K562 (cell line): ENCODE measurements at regions of chr1 and their contacts with region 1.

Region 1: DNA sequence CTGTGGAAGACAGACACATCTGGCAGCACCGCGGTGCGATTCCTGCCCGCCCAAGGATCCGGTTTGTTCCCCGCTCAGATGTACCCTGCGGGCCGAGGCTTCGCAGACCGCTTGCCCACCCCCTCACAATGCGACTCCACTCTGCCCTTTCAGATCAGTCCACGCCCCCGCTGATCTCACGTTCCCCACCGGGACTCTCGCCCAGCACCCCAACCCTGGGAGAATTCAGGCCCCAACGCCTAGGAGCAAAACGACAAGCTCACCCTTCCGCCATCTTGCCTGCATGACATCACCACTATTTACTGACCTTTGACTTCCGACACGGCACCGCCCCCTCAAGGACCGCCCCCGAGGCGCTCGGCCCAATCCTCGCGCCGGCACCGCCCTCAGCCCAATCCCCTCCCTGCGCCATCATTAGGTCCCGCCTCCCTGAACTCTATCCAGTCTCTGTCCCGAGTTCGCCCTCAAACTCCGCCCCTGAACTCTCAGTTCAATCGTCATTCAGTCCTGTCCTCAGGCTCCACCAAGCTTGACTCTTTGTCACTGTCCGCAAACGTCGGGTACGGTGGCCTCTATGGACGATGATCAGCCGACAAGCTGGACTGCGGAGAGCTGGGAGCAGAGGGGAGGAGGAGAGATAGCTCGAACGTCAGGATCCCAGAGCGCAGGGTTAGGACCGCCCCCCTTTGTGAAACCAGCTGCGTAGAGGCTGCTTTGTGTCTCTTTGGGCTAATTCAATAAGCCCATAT is at the start of gene BSDC1:
- DNase-seq: peak; percentile 98 to 100 (median 98)
- ATAC-seq: peak; percentile 91
- H3K4me3 ChIP-seq: peak within 1 kb of the TSS; percentile 68
- H3K27ac ChIP-seq: peak within 1 kb of the TSS; percentile 95
- H3K4me1 ChIP-seq: peaks cover 44 to 48% of the 10 kb centered on the region in 2 experiments
- H3K27me3 ChIP-seq: no peaks in the 10 kb centered on the region
- CTCF ChIP-seq: 0 out of 6 replicates have a peak, but pooled peaks of 1 of the 3 experiments have one; percentile 15
- EP300 ChIP-seq: peak; percentile 80
- POLR2A ChIP-seq: peak; percentile 94
- RAD21 ChIP-seq: peak in 1 of 2 experiments; percentile 16; a peak in 1 of 4 replicates
- polyA plus RNA-seq, gene BSDC1: 10.2 to 14.7 TPM

Region 2: DNA sequence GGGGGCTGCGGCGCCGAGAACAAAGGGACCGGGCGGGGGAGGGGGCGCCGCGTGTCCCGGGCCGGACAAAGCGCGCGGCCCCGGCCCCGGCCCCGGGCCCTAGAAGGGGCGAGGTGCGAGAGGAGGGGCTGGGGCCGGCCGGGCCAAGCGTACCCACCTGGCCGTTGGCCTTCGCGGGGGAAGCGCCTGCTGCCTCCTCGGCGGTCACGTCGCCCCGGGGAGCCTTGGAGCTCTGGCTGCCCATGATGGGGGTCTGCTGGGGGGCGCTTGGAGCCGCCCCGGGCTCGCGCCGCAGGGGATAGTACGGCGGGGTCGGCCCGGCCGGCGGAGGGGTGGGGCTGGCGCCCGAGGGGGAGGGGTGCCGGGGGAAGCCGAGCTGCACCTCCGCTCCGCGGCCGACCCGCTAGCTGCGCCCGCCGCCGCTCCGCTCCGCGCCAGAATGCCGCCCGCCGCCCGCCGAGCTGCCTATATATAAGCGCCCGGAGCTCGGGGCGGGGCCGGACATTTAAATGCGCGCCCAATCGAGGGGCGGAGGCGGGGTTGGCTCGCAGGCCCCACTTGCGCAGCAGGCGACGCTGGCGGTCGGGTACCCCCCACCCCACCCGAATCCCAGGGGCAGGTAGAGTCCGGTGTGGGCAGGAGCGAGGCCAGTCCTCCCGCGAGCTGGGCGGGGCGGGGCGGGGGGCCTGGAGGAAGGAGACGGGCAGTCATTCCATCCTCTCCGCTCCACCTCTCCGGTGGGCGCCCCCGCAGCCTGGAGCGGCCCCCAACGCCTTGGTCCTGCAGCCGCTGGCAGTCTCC is 58.3 kb before region 1 on chr1 and contains the start of gene MARCKSL1:
- CTCF ChIA-PET with region 1: no interaction called
- POLR2A ChIA-PET with region 1: interaction called, 47 read pairs
- in situ Hi-C with region 1: no loop called
- intact Hi-C with region 1: loop called (anchors 5 kb)
- DNase-seq: peak; percentile 89 to 95 (median 94)
- ATAC-seq: peak; percentile 77
- H3K4me3 ChIP-seq: peak within 1 kb of the TSS; percentile 89
- H3K27ac ChIP-seq: peak within 1 kb of the TSS; percentile 88
- H3K4me1 ChIP-seq: peaks cover 25 to 50% of the 10 kb centered on the region in 2 experiments
- H3K27me3 ChIP-seq: no peaks in the 10 kb centered on the region
- CTCF ChIP-seq: no peak
- EP300 ChIP-seq: no peak
- POLR2A ChIP-seq: peak; percentile 91
- RAD21 ChIP-seq: no peak
- polyA plus RNA-seq, gene MARCKSL1: 14.7 to 14.8 TPM

Region 3: DNA sequence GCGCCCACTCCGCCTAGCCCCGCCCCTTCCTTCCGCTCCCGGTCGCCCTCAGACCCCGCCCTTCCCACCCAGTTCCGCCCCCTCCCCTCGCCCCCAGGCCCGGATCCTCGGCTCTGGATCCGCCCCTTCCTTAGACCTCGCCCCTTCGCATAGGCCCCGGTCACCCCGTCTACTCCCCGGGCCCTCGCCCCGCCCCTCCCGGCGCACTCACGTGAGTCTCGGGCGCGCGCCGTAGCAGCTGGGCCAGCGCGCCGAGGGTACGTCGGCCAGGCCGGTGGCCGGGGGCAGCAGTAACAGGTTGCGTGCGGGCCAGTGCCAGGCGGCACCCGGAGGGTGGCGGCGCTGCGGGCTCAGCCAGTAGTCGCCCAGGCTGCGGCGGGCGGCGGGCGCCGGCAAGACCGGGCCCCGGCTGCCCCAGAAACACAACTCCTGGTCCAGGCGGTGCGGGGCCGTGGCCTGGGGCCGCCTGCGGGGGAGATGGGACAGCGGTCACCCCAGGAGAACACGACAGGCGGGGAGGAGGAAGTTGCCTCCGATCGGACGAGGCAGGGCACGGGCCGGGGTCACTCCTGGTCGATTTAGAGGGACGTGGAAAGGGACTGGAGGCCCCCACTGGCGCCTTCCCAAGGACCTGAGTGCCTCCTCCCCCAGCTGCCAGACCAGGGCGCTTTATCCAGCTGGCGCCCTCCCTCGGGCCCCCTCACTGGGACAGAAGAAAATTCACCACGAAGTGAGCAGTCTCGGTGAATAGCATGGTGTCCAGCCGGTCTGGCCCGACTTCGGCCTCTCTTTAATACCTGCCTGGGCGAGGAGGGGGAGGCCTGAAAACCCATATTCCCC is 42.7 kb before region 1 on chr1:
- CTCF ChIA-PET with region 1: no interaction called
- POLR2A ChIA-PET with region 1: interaction called, 6 read pairs
- in situ Hi-C with region 1: no loop called
- intact Hi-C with region 1: loop called (anchors 2 kb)
- DNase-seq: peak; percentile 99 to 100 (median 100)
- ATAC-seq: peak; percentile 95
- H3K4me3 ChIP-seq: peak overlapping the region; percentile 83
- H3K27ac ChIP-seq: peak overlapping the region; percentile 96
- H3K4me1 ChIP-seq: peaks cover 29 to 44% of the 10 kb centered on the region in 2 experiments
- H3K27me3 ChIP-seq: no peaks in the 10 kb centered on the region
- CTCF ChIP-seq: peak in 2 of 3 experiments; percentile 34 to 49; a peak in 5 of 6 replicates
- EP300 ChIP-seq: no peak
- POLR2A ChIP-seq: peak; percentile 76
- RAD21 ChIP-seq: no peak

Region 4: DNA sequence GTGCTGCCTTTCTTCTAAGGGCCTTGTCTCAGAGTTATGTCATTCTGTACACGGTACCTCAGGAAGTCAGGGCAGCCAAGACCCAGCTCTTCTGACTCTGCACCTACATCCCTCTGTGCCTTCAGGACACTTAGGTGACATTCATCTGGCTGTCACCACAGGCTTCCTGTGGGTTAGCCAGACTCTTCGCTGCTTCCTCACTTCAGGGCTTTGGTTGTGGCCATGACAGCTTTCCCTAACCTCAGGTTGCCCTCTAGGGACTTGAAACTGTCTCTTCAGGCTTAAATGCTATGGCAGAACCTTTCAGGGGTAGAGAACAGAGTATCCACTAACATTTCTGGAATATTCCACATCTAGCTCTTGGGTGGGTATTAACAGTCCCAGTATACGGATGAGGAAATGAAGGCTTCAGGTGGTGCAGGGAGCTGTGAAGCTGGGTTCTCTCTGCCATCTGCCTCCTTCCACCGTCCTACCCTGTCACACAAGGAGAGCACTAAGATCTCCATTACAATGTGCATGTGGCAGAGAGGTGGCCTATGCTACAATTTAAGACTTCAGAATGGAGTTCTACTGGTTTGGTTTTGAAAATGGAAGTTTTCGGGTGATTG is 22.1 kb before region 1 on chr1:
- CTCF ChIA-PET with region 1: no interaction called
- POLR2A ChIA-PET with region 1: interaction called, 62 read pairs
- in situ Hi-C with region 1: no loop called
- intact Hi-C with region 1: no loop called
- DNase-seq: peak in 1 of 4 experiments; percentile 15
- ATAC-seq: peak; percentile 43
- H3K4me3 ChIP-seq: no peak overlapping the region
- H3K27ac ChIP-seq: no peak overlapping the region; the same call in 2 of the 3 replicates
- H3K4me1 ChIP-seq: no peaks in the 10 kb centered on the region
- H3K27me3 ChIP-seq: no peaks in the 10 kb centered on the region
- CTCF ChIP-seq: peak in 2 of 3 experiments; percentile 24 to 37; a peak in 3 of 6 replicates
- EP300 ChIP-seq: no peak
- POLR2A ChIP-seq: peak; percentile 16; the same call in 1 of the 2 replicates
- RAD21 ChIP-seq: peak in 1 of 2 experiments; percentile 30; a peak in 2 of 4 replicates

Region 5: DNA sequence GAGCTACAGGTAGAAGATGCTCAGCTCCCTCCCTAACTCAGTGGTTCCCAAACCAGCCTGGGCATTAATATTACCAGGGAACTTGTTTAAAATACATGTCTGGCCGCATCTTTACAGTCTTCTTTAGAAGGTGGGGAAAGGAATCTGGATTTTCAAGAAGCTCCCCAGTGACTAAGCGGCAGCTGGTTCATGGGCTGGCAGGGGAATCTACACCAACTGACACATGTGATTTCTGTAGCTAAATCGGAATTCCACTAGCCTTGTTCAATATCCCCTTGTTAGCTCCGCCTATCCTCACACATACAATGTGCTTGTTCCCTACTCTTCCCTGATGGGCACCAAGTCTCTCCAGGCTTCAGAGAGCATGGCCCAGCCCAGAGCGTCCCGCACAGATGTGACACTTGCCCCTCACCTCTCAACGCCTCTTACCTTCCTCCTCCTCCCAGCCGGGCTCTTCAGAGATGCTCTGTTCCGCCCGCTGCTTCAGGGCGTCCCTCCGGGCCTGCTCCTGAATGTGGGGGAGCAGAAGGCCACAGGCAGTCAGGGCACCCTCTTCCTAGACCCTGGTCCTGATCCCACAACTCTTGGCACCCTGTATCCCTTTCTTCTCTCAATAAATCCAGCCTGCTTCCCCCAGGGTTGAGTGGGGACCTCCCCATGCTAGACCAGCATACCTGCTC is 16.6 kb before region 1 on chr1:
- CTCF ChIA-PET with region 1: no interaction called
- POLR2A ChIA-PET with region 1: interaction called, 62 read pairs
- in situ Hi-C with region 1: no loop called
- intact Hi-C with region 1: no loop called
- DNase-seq: peak in 1 of 4 experiments; percentile 22
- ATAC-seq: no peak; the same call in 2 of the 3 replicates
- H3K4me3 ChIP-seq: no peak overlapping the region
- H3K27ac ChIP-seq: no peak overlapping the region
- H3K4me1 ChIP-seq: no peaks in the 10 kb centered on the region
- H3K27me3 ChIP-seq: no peaks in the 10 kb centered on the region
- CTCF ChIP-seq: no peak
- EP300 ChIP-seq: no peak
- POLR2A ChIP-seq: no peak
- RAD21 ChIP-seq: no peak

Region 6: GRCh38 chr1:32413507-32414185 is 19.3 kb after region 1 on chr1:
- CTCF ChIA-PET with region 1: no interaction called
- POLR2A ChIA-PET with region 1: interaction called, 5 read pairs
- in situ Hi-C with region 1: no loop called
- intact Hi-C with region 1: loop called (anchors 1 kb)
- DNase-seq: peak; percentile 80 to 96 (median 82)
- ATAC-seq: peak; percentile 99
- H3K4me3 ChIP-seq: no peak overlapping the region
- H3K27ac ChIP-seq: peak overlapping the region; percentile 69
- H3K4me1 ChIP-seq: peaks cover 0 to 7% of the 10 kb centered on the region in 2 experiments; a peak in 3 of 5 replicates
- H3K27me3 ChIP-seq: no peaks in the 10 kb centered on the region
- CTCF ChIP-seq: peak; percentile 87 to 98 (median 93)
- EP300 ChIP-seq: no peak
- POLR2A ChIP-seq: no peak
- RAD21 ChIP-seq: peak; percentile 93 to 99

Region 7: GRCh38 chr1:32636914-32637645 is 242.8 kb after region 1 on chr1:
- CTCF ChIA-PET with region 1: no interaction called
- POLR2A ChIA-PET with region 1: no interaction called
- in situ Hi-C with region 1: no loop called
- intact Hi-C with region 1: no loop called
- DNase-seq: no peak
- ATAC-seq: peak; percentile 51
- H3K4me3 ChIP-seq: no peak overlapping the region
- H3K27ac ChIP-seq: no peak overlapping the region
- H3K4me1 ChIP-seq: peaks cover 2 to 7% of the 10 kb centered on the region in 2 experiments; a peak in 2 of 5 replicates
- H3K27me3 ChIP-seq: no peaks in the 10 kb centered on the region
- CTCF ChIP-seq: no peak
- EP300 ChIP-seq: no peak
- POLR2A ChIP-seq: no peak
- RAD21 ChIP-seq: no peak

Region 8: GRCh38 chr1:32817159-32817814 is 423.0 kb after region 1 on chr1 and contains the starts of genes S100PBP and YARS1:
- CTCF ChIA-PET with region 1: no interaction called
- POLR2A ChIA-PET with region 1: no interaction called
- in situ Hi-C with region 1: no loop called
- intact Hi-C with region 1: loop called (anchors 5 kb)
- DNase-seq: peak; percentile 97 to 100 (median 98)
- ATAC-seq: peak; percentile 89
- H3K4me3 ChIP-seq: peak within 1 kb of the TSS; percentile 74
- H3K27ac ChIP-seq: peak within 1 kb of the TSS; percentile 98
- H3K4me1 ChIP-seq: peaks cover 36 to 39% of the 10 kb centered on the region in 2 experiments
- H3K27me3 ChIP-seq: no peaks in the 10 kb centered on the region
- CTCF ChIP-seq: 0 out of 6 replicates have a peak, but pooled peaks of 1 of the 3 experiments have one; percentile 8
- EP300 ChIP-seq: peak; percentile 94
- POLR2A ChIP-seq: peak; percentile 92
- RAD21 ChIP-seq: peak; percentile 31 to 44; a peak in 3 of 4 replicates
- polyA plus RNA-seq, gene S100PBP: 22.9 to 31.8 TPM
- polyA plus RNA-seq, gene YARS1: 66.2 to 92.8 TPM